HepG2 (cell line): ENCODE measurements at regions of chr2 and their contacts with region 1.

Region 1: DNA sequence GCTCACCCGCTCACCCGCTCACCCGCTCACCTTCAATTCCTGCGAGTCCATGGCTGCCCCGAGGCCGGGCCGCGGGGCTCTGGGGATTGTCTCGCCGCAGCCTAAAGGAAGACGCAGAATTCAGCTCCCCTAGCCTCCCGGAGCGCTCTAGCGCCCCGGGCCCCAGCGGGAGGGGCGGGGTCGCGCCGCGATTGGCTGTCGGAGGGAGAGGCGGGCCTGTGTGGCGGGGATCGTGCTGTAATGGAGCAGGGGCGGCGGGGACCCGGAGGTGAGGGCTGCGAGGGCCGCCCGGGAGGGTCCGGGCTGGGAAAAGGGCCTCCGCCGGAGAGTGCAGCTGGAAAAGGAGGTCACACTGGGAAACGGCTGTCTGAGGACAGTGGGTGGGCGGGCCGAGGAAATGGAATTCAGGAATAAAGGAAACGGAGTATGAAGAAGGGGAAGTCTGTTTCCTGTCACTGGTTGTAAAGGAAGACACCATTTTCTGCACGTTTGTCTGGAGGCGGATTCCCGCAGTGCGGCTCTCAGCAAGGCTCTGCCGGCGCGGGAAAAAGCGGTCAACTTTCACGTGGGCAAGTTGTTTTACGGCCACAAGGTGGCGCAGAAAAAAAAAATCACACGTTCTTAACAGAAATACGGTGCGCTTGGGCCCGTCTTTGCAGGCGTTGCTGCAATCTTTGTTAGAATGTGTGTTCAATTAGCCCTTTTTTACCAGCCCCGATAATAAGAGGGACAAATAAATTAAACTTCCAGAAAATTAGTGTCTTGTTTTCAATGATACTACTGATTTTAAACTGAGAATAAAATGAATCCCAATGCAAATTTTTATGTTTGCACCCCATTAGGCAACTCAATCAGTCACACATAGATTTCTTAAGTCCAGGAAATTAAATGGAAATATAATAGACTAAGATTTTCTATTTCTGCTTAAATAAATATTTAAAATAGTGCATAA is at the start of gene TTC21B:
- DNase-seq: peak; percentile 93
- ATAC-seq: peak; percentile 97
- H3K4me3 ChIP-seq: peak within 1 kb of the TSS; percentile 88 to 97 (median 91)
- H3K27ac ChIP-seq: peak within 1 kb of the TSS; percentile 84
- H3K4me1 ChIP-seq: peaks cover 48% of the 10 kb centered on the region
- H3K27me3 ChIP-seq: no peaks in the 10 kb centered on the region; a peak in 1 of 5 replicates
- CTCF ChIP-seq: peak; percentile 90
- EP300 ChIP-seq: peak in 1 of 2 experiments; percentile 30; a peak in 1 of 4 replicates
- POLR2A ChIP-seq: peak; percentile 86
- RAD21 ChIP-seq: peak; percentile 87
- total RNA-seq, gene TTC21B: 63.0 and 67.1 TPM in 2 replicates

Region 2: DNA sequence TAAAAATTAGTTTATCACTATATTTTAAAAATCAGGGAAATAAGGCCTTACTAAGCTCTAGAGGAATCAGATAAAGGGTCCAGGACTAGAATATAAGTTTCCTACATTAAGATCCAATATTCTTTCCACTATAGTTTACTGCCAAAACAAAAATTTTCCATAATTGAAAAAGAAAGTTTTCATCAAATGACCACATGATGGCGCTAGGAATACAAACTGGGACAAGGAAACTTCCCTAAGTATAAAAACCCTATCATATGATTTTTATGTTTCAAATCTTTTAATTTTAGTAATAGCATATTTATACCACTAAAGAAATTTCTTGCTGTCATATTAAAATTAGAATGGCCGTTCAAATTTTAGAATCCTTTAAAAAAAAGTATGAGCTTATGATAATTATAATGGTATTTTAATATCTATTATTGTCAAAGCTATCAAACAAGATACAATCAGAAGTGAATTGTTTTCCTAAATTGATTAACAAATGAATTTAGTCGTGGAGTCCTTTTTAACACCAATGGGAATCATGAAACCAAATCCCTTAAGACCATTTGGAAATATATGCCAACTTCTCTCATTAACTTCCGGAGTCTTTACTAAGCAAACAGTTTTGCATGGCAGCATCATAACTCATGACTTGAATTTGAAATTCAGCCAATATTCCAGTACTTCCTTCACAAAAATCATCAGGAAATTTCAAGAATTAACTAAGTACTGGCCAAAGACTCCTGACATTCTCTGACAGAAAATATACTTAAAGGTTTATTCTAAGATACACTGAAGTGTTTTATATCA is 103.6 kb after region 1 on chr2:
- CTCF ChIA-PET with region 1: no interaction called
- POLR2A ChIA-PET with region 1: interaction called, 3 read pairs
- in situ Hi-C with region 1: no loop called
- intact Hi-C with region 1: loop called (anchors 1 kb)
- DNase-seq: peak; percentile 47
- ATAC-seq: no peak
- H3K4me3 ChIP-seq: no peak overlapping the region
- H3K27ac ChIP-seq: no peak overlapping the region
- H3K4me1 ChIP-seq: peaks cover 6% of the 10 kb centered on the region; the same call in 1 of the 2 replicates
- H3K27me3 ChIP-seq: no peaks in the 10 kb centered on the region
- CTCF ChIP-seq: peak; percentile 62
- EP300 ChIP-seq: no peak
- POLR2A ChIP-seq: no peak
- RAD21 ChIP-seq: peak; percentile 37; the same call in 1 of the 2 replicates

Region 3: DNA sequence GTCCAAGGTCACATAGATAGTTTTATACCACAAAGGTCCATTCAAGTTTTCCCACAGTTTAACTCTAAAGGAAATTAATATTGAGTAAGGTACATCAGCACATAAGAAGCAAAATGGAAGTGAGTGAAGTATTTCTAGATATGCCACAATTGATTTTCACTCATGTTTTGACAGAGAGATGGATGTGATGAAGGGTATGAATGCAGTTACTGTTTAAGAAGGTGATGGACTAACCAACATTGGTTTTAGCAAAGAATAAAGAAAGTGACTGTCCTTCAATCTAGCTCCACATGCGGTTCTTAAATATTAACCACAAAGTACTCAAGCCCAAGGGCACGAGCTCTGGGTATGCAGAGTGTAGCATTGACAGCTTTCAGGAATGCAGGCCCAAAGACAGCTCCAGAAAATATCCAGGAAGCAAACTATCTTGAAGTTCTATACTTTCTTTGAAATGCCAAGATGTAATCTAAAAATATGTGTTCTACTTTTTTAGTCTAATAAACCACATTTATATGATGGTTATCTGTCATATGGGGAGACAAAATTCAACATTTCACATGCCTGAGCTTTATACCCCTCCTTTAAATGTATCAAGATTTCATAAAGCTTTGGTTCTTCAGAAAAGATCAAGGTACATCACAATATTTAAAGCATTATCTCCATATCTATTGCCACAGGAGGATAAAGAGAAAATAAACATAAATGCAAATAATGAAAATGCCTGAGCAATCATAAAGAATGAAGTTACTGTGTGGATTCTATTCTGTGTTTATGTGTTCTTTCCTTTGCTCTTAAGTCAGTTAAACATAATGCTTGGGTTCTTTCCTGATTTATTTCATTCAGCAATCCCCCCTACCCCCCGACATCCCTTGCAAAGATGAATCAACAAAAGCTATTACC is 180.6 kb after region 1 on chr2:
- CTCF ChIA-PET with region 1: no interaction called
- POLR2A ChIA-PET with region 1: interaction called, 33 read pairs
- in situ Hi-C with region 1: loop called (anchors 5 kb)
- intact Hi-C with region 1: no loop called
- DNase-seq: peak; percentile 100
- ATAC-seq: peak; percentile 97
- H3K4me3 ChIP-seq: peak overlapping the region in 2 of 3 experiments; percentile 28 to 42; a peak in 3 of 6 replicates
- H3K27ac ChIP-seq: peak overlapping the region; percentile 97
- H3K4me1 ChIP-seq: peaks cover 94% of the 10 kb centered on the region
- H3K27me3 ChIP-seq: no peaks in the 10 kb centered on the region
- CTCF ChIP-seq: no peak
- EP300 ChIP-seq: peak in 1 of 2 experiments; percentile 99; a peak in 3 of 4 replicates
- POLR2A ChIP-seq: peak; percentile 41 to 86; a peak in 3 of 4 replicates
- RAD21 ChIP-seq: no peak

Region 4: GRCh38 chr2:166234112-166234846 is 280.3 kb after region 1 on chr2:
- CTCF ChIA-PET with region 1: no interaction called
- POLR2A ChIA-PET with region 1: interaction called, 8 read pairs
- in situ Hi-C with region 1: no loop called
- intact Hi-C with region 1: loop called (anchors 5 kb)
- DNase-seq: peak; percentile 58
- ATAC-seq: no peak
- H3K4me3 ChIP-seq: no peak overlapping the region
- H3K27ac ChIP-seq: peak overlapping the region; percentile 48
- H3K4me1 ChIP-seq: peaks cover 50% of the 10 kb centered on the region
- H3K27me3 ChIP-seq: no peaks in the 10 kb centered on the region
- CTCF ChIP-seq: no peak
- EP300 ChIP-seq: peak in 1 of 2 experiments; percentile 89; a peak in 2 of 4 replicates
- POLR2A ChIP-seq: no peak
- RAD21 ChIP-seq: no peak

Region 5: GRCh38 chr2:166417669-166418068 is 463.7 kb after region 1 on chr2:
- CTCF ChIA-PET with region 1: interaction called, 5 read pairs
- POLR2A ChIA-PET with region 1: no interaction called
- in situ Hi-C with region 1: loop called (anchors 5 kb)
- intact Hi-C with region 1: loop called (anchors 2 kb)
- DNase-seq: peak; percentile 70
- ATAC-seq: peak; percentile 70
- H3K4me3 ChIP-seq: no peak overlapping the region; a peak in 1 of 6 replicates
- H3K27ac ChIP-seq: no peak overlapping the region
- H3K4me1 ChIP-seq: peaks cover 30% of the 10 kb centered on the region
- H3K27me3 ChIP-seq: no peaks in the 10 kb centered on the region
- CTCF ChIP-seq: peak; percentile 55
- EP300 ChIP-seq: no peak
- POLR2A ChIP-seq: no peak
- RAD21 ChIP-seq: no peak